Activated B cell treated with CpG ODN at 0.5 μM for 24 hours (primary cell): ENCODE measurements at regions of chr4 and their contacts with region 1.

Region 1: GRCh38 chr4:154416190-154416547 is 75.4 kb downstream of the DCHS2 start:
- DNase-seq: peak; percentile 17
- ATAC-seq: peak; percentile 25
- H3K4me3 Mint-ChIP-seq: peak overlapping the region; percentile 91
- H3K27ac Mint-ChIP-seq: peak overlapping the region; percentile 93
- H3K4me1 Mint-ChIP-seq: peaks cover 32% of the 10 kb centered on the region
- H3K27me3 Mint-ChIP-seq: peaks cover 2% of the 10 kb centered on the region
- CTCF ChIP-seq: no peak

Region 2: DNA sequence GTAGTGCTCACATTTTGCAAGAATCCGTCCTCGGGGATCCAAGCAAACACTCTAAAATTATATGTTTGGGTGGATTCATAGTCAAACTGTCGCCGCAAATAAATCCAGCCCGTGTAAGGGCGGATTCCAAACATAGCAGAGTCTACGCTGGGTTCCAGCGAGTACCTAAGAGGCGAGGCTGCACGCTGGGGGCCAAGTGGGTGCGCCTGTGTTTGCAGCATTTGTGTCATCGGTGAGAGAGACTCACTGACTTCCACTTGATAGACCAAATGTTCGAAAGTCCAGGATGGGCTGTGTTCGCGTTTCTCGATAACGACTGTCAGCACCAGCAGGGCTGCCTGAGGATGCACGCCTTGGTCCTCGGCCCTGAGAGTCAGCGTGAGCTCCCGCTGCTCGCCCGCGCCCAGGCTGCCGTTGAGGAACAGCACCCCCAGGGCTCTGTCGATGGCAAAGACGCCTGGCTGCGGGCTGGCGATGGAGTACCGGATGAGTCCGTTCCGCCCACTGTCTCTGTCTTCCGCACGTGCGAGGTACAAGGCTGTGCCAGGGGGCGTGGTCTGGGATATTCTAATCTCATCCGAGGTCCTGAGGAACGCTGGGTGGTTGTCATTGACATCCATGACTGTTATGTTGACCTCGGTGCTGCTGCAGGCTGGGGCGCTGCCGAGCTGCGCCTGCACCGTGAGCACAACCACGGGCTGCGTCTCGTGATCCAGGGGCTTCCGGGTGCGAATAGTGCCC is 83.3 kb before region 1 on chr4:
- CTCF ChIA-PET with region 1: no interaction called
- POLR2A ChIA-PET with region 1: no interaction called
- intact Hi-C with region 1: loop called (anchors 5 kb)
- DNase-seq: peak; percentile 38
- ATAC-seq: peak; percentile 90
- H3K4me3 Mint-ChIP-seq: peak overlapping the region; percentile 85
- H3K27ac Mint-ChIP-seq: peak overlapping the region; percentile 64
- H3K4me1 Mint-ChIP-seq: peaks cover 11% of the 10 kb centered on the region
- H3K27me3 Mint-ChIP-seq: peaks cover 22% of the 10 kb centered on the region
- CTCF ChIP-seq: no peak

Region 3: GRCh38 chr4:154491341-154492271 is 75.4 kb after region 1 on chr4 and contains the start of gene DCHS2:
- CTCF ChIA-PET with region 1: no interaction called
- POLR2A ChIA-PET with region 1: no interaction called
- intact Hi-C with region 1: loop called (anchors 2 kb)
- DNase-seq: no peak
- ATAC-seq: peak; percentile 38
- H3K4me3 Mint-ChIP-seq: peak within 1 kb of the TSS; percentile 84
- H3K27ac Mint-ChIP-seq: no peak within 1 kb of the TSS
- H3K4me1 Mint-ChIP-seq: peaks cover 18% of the 10 kb centered on the region
- H3K27me3 Mint-ChIP-seq: peaks cover 55% of the 10 kb centered on the region
- CTCF ChIP-seq: no peak
- total RNA-seq, gene DCHS2: 0.02 and 0.13 TPM in 2 replicates

Region 4: DNA sequence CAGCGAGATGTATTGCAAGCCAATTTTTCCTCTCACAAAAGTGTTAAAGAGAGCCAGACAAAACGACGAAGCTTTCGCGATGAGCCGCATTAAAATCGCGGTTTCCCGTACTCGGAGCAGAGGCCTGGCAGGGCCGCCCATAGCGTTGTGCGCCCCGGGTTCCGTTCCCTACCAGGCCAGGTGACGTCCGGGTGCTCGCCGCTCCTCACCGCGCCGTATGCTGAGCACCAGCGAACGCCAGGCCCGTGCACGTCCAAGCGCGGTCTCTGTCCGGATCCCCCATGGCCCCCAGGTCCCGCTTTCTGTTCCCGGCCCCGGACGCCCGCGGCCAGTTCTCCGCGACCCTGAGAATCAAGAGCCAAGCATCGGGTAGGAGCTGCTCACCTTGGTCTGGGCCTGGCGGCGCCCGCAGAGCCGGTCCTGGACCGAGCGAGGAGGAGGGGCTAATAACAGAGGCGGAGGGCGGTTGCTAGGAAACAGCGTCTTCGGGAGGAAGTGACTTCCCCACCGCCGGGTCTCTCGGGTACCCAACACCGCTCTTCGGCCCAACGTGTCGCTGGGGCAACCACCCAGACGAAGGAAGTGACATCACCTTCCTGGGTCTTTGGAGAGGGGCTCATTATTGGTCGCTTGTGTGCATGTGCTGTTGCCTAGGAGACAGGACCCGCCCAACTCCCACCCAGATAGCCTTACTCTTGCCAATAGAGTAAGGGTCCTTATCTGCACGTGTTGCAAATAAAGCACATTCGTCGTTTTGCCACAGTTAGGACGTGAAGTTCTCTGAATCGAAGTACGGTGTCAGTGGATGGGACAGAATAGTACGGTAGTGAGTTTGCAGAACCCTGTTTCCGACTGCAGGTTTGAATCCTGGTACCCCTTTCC is 960.5 kb after region 1 on chr4 and contains the start of gene MAP9:
- CTCF ChIA-PET with region 1: no interaction called
- POLR2A ChIA-PET with region 1: no interaction called
- intact Hi-C with region 1: loop called (anchors 5 kb)
- DNase-seq: peak; percentile 84
- ATAC-seq: peak; percentile 96
- H3K4me3 Mint-ChIP-seq: peak within 1 kb of the TSS; percentile 92
- H3K27ac Mint-ChIP-seq: peak within 1 kb of the TSS; percentile 92
- H3K4me1 Mint-ChIP-seq: peaks cover 15% of the 10 kb centered on the region
- H3K27me3 Mint-ChIP-seq: peaks cover 3% of the 10 kb centered on the region
- CTCF ChIP-seq: no peak
- total RNA-seq, gene MAP9: 8.8 and 10.7 TPM in 2 replicates